Posterior vena cava (tissue), 2 donors: ENCODE measurements at regions of chr17 and their contacts with region 1.

Region 1: DNA sequence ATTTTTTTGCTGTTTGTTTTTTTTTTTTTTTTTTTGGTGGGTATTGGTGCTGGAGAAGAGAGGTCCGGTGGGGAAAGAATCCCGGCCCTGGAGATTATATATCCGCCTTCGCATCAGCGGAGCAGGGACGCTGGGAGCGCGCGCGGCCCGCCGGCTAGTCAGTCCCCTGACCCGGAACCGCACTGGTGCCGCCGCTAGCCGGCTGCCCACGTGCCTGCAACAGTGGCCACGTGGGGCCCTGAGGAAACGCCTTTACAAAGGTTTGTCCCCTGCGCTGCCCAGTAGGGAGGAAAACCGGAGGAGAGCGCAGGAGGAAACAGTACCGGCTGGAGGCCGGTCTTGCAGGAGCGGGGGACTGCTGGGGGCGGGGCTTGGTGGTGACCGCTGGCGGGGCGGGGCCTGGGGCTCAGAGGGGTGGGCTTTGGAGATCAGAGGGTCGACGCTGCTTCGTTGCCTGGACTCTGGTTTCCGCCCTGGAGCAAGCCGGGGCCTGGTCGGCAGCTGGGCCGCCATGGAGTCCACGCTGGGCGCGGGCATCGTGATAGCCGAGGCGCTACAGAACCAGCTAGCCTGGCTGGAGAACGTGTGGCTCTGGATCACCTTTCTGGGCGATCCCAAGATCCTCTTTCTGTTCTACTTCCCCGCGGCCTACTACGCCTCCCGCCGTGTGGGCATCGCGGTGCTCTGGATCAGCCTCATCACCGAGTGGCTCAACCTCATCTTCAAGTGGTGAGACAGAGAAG is at the start of gene G6PC3:
- DNase-seq: peak; percentile 98
- total RNA-seq, gene G6PC3: 40.3 to 41.4 TPM

Region 2: GRCh38 chr17:44086364-44087311 is 16.0 kb after region 1 on chr17:
- intact Hi-C with region 1: loop called in 1 of 2 experiments (anchors 1 kb)
- DNase-seq: no peak

Region 3: GRCh38 chr17:44110823-44111633 is 40.4 kb after region 1 on chr17:
- intact Hi-C with region 1: loop called in 1 of 2 experiments (anchors 5 kb)
- DNase-seq: peak; percentile 99

Region 4: DNA sequence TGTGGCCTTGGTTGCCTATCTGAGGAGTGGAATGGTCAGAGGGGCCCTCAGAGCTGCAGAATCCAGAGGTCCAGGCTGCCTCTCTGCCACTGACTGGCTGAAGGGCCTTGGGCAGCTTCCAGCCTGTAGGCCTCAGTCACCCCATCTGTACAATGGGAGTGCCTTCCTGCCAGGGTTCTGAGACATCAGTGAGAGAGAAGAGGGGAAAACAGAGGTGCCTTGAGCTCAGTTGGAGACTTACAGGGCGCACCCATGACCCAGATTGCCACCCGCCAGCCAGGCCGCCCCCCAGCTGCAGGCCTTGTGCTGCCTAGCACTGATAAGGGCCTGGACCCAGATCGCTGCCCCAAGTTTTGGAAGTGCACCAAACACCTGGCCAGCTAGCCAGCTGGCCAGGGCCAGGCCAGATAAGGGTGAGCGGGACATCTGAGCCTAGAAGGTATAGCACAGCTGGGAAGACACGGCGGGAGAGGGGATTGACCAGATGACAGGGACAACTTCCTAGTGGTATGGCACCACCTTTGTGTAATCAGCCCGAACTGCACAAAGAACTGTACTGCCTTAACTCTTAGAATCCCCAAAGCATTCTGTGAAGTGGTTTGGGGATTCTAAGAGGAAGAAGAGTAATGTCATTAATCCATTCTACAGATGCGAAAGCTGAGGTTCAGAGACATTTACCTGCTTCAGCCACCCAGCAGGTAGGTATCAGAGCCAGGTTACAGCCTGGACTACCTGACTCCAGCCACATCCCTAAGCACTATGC is 196.0 kb after region 1 on chr17:
- intact Hi-C with region 1: no loop called
- DNase-seq: no peak